PC-3 (cell line): ENCODE measurements at regions of chr17 and their contacts with region 1.

Region 1: DNA sequence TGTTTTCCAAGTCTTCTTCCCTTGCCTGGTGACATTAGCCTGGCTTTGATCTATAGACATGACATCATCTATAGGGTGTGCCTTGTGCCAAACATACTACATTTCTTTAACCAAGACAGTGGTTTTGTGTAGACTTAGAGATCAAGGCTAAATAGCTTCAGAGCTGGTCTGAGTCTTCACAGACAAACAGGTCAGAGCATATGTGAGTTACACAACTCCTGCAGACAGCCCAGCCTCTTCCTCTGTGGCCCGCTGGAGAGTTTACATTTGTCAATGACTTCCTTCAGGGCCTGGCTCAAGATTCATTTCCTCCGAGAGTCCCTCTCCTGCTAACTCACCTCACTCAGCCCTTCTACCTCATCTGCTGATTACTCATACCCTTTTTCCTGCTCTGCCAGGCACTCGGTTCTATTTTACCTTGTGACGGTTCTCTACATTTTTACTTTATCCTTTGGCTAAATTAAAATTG is 73.1 kb upstream of the TANC2 start:
- DNase-seq: peak; percentile 99
- ATAC-seq: peak; percentile 94
- H3K4me3 ChIP-seq: no peak overlapping the region; the same call in 1 of the 2 replicates
- H3K27ac ChIP-seq: peak overlapping the region; percentile 79
- H3K4me1 ChIP-seq: peaks cover 43% of the 10 kb centered on the region
- H3K27me3 ChIP-seq: no peaks in the 10 kb centered on the region
- CTCF ChIP-seq: no peak

Region 2: DNA sequence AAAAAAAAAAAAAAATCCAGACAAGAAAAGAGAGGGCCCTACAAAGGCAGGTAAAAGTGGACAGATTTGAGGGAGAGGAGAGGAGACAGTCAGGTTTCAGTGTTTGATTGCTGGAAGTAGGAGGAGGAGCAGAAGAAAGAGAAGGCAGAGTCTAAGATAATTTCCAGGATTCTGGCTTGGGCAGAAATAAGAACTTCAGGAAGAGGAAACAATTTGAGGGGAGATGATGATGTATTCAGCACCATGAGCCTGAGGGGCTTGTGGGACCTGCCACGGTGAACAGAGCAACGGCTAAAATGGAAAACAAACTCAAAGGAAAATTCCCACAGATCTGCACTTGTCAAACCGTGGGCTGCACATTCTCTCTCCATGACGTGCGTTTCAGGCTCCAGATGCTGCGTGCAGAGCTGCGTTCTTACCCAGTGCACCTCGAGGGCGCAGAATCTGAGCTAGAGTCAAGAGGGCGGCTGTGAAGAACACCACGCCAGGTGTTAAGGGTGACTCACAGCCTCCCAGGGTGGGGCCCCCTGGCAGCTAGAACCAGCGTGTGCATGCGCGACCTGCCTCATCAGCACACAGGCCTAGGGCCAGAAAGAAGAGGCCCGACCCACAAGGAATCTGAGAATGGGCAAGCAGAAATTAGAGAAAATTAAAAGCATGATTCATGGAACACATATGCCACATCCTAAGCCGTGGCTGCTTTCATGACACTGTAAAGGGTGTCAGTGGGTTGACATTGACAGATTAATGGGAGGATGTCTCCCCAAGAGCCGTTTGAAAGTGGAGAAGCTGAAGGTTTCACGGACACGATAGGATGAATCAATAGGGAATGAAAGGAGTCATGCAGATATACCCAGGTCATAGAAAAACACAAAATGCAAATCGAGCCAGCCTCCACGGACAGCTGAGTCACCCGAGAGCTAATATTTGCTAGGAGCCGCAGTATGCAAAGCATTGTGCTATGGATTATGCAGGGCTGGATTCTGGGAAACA is 113.9 kb before region 1 on chr17:
- CTCF ChIA-PET with region 1: no interaction called
- POLR2A ChIA-PET with region 1: no interaction called
- intact Hi-C with region 1: loop called (anchors 2 kb)
- DNase-seq: peak; percentile 98
- ATAC-seq: peak; percentile 88
- H3K4me3 ChIP-seq: peak overlapping the region; percentile 39
- H3K27ac ChIP-seq: peak overlapping the region; percentile 92
- H3K4me1 ChIP-seq: peaks cover 47% of the 10 kb centered on the region
- H3K27me3 ChIP-seq: no peaks in the 10 kb centered on the region
- CTCF ChIP-seq: no peak

Region 3: GRCh38 chr17:62791751-62792445 is 101.0 kb before region 1 on chr17:
- CTCF ChIA-PET with region 1: no interaction called
- POLR2A ChIA-PET with region 1: no interaction called
- intact Hi-C with region 1: loop called (anchors 2 kb)
- DNase-seq: peak; percentile 98
- ATAC-seq: peak; percentile 61
- H3K4me3 ChIP-seq: peak overlapping the region; percentile 27
- H3K27ac ChIP-seq: peak overlapping the region; percentile 89
- H3K4me1 ChIP-seq: peaks cover 53% of the 10 kb centered on the region
- H3K27me3 ChIP-seq: no peaks in the 10 kb centered on the region
- CTCF ChIP-seq: no peak

Region 4: DNA sequence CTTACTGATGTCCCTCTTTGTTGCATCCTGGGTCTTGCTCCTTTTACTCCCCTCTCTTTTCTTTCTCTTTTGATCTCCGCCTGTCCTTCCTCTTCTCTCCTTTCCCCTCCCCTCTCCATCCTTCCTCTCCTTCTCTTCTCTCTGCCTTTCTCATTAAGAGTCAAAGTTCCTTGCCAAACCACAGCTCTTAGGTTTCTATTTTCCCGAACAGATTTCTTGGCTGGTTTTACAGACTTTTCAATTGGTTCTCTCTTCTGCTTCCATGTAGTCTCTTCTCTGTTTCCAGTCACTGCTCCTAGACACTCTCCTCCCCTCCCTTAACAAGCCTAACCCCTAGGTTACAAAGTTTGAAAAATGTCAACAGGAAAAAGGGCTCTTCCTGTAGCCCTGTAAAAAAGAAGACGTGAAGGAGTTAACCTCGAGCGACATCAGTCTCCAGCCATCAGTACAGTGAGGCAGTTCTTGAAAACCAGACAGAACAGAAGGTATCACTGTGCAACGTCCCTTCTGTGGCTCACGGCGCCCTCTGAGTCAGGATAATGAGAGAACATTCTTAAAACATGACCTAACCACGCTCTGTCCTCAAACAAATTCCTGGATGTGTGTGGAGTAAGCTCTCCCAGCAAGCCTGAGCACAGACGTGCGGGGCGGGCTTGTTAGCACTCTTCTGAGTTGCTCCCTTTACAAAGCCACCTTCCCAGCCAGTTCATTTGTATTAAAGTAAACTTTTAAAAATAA is 73.3 kb before region 1 on chr17:
- CTCF ChIA-PET with region 1: no interaction called
- POLR2A ChIA-PET with region 1: no interaction called
- intact Hi-C with region 1: loop called (anchors 2 kb)
- DNase-seq: peak; percentile 98
- ATAC-seq: peak; percentile 95
- H3K4me3 ChIP-seq: peak overlapping the region; percentile 47
- H3K27ac ChIP-seq: peak overlapping the region; percentile 56
- H3K4me1 ChIP-seq: peaks cover 40% of the 10 kb centered on the region
- H3K27me3 ChIP-seq: no peaks in the 10 kb centered on the region
- CTCF ChIP-seq: peak; percentile 32; the same call in 1 of the 2 replicates

Region 5: DNA sequence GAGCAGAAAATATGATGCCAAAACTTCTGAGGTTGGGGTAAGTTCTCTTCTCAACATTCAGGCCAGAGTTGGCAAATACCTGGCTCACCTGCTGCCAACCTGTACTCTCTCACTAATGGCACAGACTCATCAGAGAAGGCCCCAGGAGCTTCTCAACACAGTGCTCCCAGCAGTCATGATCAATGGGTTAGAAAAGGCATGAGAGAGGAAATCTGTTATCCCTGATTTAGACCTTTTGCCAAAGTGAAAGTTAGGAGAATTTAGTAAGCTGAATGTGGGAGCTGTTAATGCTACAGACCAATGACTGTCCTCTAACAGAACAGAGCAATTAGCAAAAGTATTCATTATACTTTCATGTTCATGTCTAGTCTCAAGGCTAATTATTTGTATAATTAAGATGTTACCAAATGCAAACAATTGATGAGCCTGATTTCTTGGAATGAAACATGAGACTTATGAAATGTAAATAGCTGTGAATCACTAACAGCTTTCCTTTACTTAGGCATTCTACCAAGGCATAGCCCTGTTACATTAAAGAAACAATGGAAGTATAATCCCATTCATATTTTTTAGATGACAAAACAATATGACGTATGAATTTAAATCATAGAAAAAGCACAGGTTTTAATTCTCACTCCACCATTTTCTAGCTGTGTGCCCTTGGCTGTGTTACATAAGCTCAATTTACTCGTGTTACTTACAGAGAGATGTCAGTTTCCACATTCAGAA is 16.1 kb before region 1 on chr17:
- CTCF ChIA-PET with region 1: no interaction called
- POLR2A ChIA-PET with region 1: no interaction called
- intact Hi-C with region 1: loop called (anchors 1 kb)
- DNase-seq: peak; percentile 83
- ATAC-seq: peak; percentile 86
- H3K4me3 ChIP-seq: peak overlapping the region; percentile 0; the same call in 1 of the 2 replicates
- H3K27ac ChIP-seq: peak overlapping the region; percentile 60
- H3K4me1 ChIP-seq: peaks cover 24% of the 10 kb centered on the region
- H3K27me3 ChIP-seq: no peaks in the 10 kb centered on the region
- CTCF ChIP-seq: no peak

Region 6: GRCh38 chr17:62955906-62956305 is 63.0 kb after region 1 on chr17:
- CTCF ChIA-PET with region 1: no interaction called
- POLR2A ChIA-PET with region 1: no interaction called
- intact Hi-C with region 1: loop called (anchors 2 kb)
- DNase-seq: peak; percentile 75
- ATAC-seq: peak; percentile 90
- H3K4me3 ChIP-seq: no peak overlapping the region
- H3K27ac ChIP-seq: peak overlapping the region; percentile 27
- H3K4me1 ChIP-seq: peaks cover 25% of the 10 kb centered on the region
- H3K27me3 ChIP-seq: no peaks in the 10 kb centered on the region
- CTCF ChIP-seq: no peak